Psoas muscle (tissue), 8 donors: ENCODE measurements at regions of chr1 and their contacts with region 1.

Region 1: DNA sequence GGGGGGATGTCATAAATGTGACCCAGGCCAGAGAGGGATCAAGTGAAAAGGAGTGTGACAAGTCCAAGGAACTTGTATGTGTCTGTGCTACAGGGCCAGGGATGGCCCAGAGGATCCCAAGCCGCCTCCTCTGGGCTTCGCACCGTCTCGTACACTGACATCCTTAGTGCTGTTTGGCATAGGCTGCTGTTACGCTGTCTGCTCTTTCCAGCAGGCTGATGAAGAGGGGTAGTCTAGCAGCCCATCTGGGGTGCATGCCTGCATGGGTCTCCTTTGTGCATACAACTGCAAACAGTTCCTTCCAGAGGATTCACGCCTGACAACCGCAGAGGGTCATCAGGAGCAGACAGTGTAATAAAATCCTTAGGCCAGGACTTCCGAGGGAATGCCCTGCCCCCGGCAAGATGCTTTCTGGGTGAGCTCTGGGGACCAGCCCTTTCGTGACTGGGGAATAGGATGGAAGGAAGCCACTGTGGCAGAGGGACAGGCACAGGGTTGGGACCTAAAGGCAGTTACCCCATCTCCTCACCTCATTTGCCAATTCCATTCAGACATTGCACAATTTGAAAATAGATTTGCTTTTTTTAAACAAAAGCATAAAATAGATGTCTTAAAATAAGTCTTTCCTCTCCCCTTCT is 6.3 kb upstream of the GOLT1A start:
- DNase-seq: no peak
- ATAC-seq: no peak
- H3K4me3 ChIP-seq: no peak overlapping the region
- H3K27ac ChIP-seq: no peak overlapping the region
- H3K4me1 ChIP-seq: no peaks in the 10 kb centered on the region
- H3K27me3 ChIP-seq: peaks cover 0 to 22% (median 0%) of the 10 kb centered on the region in 3 donors
- CTCF ChIP-seq: no peak

Region 2: GRCh38 chr1:204357551-204358490 is 137.7 kb after region 1 on chr1:
- intact Hi-C with region 1: loop called in 1 of 2 experiments (anchors 1 kb)
- DNase-seq: peak; percentile 54 to 75
- ATAC-seq: peak; percentile 17 to 63 (median 50)
- H3K4me3 ChIP-seq: no peak overlapping the region
- H3K27ac ChIP-seq: no peak overlapping the region
- H3K4me1 ChIP-seq: peaks cover under 1% of the 10 kb centered on the region
- H3K27me3 ChIP-seq: peaks cover 0 to 7% (median 0%) of the 10 kb centered on the region in 3 donors
- CTCF ChIP-seq: no peak

Region 3: GRCh38 chr1:204411451-204412204 is 191.5 kb after region 1 on chr1 and contains the start of gene PPP1R15B:
- intact Hi-C with region 1: no loop called
- DNase-seq: peak; percentile 96 to 99
- ATAC-seq: peak; percentile 93 to 95 (median 94)
- H3K4me3 ChIP-seq: peak within 1 kb of the TSS; percentile 93
- H3K27ac ChIP-seq: peak within 1 kb of the TSS; percentile 98
- H3K4me1 ChIP-seq: peaks cover 10% of the 10 kb centered on the region
- H3K27me3 ChIP-seq: no peaks in the 10 kb centered on the region
- CTCF ChIP-seq: no peak
- total RNA-seq, gene PPP1R15B: 15.5 to 35.2 (median 26.0) TPM